Activated B cell treated with CpG ODN at 0.5 μM for 24 hours (primary cell): ENCODE measurements at regions of chr2 and their contacts with region 1.

Region 1: DNA sequence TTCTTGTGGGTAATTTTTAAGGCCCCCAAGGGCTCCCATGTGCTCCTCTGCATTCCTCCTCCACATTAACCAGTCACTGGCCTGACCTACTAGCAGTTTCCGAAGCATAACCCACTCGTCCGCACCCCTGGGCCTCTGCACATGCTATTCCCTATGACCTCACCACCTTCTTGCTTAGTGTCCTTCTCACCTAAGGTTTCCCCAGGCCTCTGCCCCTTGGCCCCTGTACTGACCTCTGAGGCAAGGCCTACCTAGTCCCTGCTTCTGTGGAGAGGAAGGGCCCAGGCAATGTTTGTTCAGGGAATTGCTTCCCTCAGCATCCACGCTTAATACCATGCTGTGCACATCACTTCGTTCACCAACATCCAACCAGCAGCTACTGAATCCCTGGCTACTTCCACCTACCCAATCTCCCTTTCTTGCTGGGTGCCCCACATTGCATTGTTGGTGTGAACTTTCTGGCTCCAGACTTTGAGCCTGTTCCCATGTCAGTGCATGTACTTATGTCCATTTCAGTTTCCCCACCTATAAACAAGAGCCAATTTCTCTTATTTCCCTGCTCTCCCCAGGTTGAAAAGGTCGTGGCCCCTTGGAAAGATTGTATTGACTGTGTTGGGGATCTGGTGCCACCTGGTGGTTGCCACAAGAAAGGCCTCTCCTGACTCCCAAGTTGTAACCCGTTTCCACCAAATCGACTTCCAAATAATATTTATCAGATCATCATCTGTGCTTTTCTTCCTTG is 19.2 kb upstream of the TMEM177 start:
- DNase-seq: no peak
- ATAC-seq: peak; percentile 61
- H3K4me3 Mint-ChIP-seq: no peak overlapping the region
- H3K27ac Mint-ChIP-seq: no peak overlapping the region
- H3K4me1 Mint-ChIP-seq: no peaks in the 10 kb centered on the region
- H3K27me3 Mint-ChIP-seq: peaks cover 19% of the 10 kb centered on the region
- CTCF ChIP-seq: peak; percentile 56

Region 2: DNA sequence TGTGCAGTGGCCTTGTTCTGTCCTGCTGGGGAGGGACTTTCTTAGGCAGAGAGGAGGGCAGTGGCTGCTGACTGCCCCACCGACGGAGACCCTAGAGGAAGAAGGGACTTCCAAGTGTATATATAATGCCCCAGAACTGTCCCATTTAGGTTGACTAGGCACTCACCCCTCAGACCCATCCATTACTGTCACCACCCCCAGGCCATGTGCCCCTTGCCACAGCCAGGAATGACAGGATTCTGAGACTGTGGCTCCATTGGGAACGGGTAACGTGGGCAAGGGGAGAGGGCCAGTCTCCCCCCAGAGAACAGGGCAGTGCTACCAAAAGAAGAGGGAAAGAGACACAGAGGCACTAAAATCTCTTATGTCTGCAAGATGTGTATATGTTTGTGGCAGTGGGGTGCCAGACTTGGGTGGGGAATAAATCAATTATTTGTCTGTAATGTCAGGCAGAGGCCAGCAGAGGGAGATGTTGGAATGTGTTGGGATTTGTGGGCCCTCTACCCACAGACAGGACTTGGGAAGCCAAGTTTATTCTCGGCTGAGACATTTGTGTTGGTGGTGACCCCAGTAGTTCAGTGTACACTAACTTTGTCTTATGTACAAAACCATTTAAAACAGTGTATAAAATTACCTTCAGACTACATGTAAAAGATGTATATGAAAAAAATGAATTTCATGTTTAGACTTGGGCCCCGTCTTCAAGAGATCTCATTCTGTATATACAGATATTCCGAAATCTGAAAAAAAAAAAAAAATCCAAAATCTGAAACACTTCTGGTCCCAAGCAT is 252.1 kb before region 1 on chr2:
- CTCF ChIA-PET with region 1: no interaction called
- POLR2A ChIA-PET with region 1: no interaction called
- intact Hi-C with region 1: loop called (anchors 1 kb)
- DNase-seq: no peak
- ATAC-seq: peak; percentile 47
- H3K4me3 Mint-ChIP-seq: no peak overlapping the region
- H3K27ac Mint-ChIP-seq: no peak overlapping the region
- H3K4me1 Mint-ChIP-seq: no peaks in the 10 kb centered on the region
- H3K27me3 Mint-ChIP-seq: peaks cover 13% of the 10 kb centered on the region
- CTCF ChIP-seq: peak; percentile 68

Region 3: DNA sequence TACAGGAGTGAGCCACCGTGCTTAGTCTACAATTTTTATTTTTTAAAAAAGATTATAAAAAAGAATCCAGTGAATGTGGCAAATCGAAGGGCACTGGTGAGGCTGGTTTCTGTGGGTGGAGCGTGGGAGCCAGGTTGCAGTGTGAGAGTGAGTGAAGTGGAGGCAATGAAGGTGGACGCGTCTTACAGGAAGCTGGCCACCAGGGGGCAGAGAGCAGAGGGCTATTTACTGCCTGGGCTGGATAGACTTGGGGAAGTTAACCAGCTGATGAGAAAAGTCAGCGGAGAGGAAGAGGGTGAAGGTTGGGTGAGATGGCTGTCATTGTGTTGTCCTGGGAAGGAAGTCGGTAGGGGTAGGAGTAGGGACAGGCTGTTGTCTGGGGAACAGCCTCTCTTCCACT is 142.3 kb before region 1 on chr2:
- CTCF ChIA-PET with region 1: no interaction called
- POLR2A ChIA-PET with region 1: no interaction called
- intact Hi-C with region 1: loop called (anchors 1 kb)
- DNase-seq: no peak
- ATAC-seq: peak; percentile 37
- H3K4me3 Mint-ChIP-seq: no peak overlapping the region
- H3K27ac Mint-ChIP-seq: no peak overlapping the region
- H3K4me1 Mint-ChIP-seq: no peaks in the 10 kb centered on the region
- H3K27me3 Mint-ChIP-seq: peaks cover 23% of the 10 kb centered on the region
- CTCF ChIP-seq: no peak

Region 4: GRCh38 chr2:119641562-119642258 is 18.1 kb before region 1 on chr2:
- CTCF ChIA-PET with region 1: interaction called, 141 read pairs
- POLR2A ChIA-PET with region 1: no interaction called
- intact Hi-C with region 1: loop called (anchors 1 kb)
- DNase-seq: peak; percentile 55
- ATAC-seq: peak; percentile 100
- H3K4me3 Mint-ChIP-seq: no peak overlapping the region
- H3K27ac Mint-ChIP-seq: no peak overlapping the region
- H3K4me1 Mint-ChIP-seq: peaks cover 4% of the 10 kb centered on the region
- H3K27me3 Mint-ChIP-seq: peaks cover 10% of the 10 kb centered on the region
- CTCF ChIP-seq: peak; percentile 90